CD8-positive, alpha-beta T cell (primary cell): ENCODE measurements at regions of chr11 and their contacts with region 1.

Region 1: DNA sequence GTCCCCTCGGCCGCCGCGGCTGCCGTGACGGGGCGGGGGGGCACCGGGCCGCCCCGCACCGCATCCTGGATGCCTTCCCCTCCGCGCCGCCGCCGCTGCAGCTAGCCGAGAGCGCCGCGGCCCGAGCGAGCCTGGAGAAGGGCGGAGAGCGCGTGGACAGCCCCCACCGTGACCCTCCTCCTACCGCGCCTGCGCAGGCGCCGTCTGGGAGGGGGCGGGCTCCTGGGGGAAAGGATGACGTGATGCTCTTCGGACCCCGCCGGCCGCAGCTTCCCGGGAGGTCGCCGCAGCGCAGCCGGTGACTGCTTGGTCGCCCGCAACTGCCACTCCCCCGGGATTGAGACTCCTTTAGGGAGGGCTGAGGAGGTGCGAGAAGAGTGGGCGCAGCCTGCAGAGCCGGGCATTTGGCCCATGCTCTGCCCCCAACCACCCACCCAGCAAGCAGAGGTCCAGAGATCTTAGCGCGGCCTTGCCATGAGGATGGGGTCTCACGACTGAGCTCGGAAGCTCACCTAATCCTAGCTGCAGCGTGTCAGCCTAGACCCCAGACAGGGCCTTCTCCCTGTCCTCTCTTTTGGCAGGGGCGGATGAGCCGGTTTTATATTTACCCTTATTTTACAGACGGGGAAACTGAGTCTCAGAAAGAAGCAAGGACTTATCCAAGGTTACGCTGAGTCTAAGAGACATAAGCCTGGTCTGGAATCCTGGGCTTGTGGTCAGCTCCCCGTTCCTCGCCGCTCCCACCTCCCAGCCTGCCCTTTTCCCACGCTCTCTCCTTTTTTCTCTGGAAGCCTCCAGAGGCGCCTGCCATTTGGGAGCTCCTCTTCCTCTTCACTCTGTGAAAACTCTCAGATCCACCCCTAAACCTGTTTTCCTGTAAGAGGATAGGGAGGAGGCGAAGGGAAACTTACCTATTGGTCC is at the start of gene DENND5A:
- DNase-seq: peak; percentile 12 to 74 (median 52)
- ATAC-seq: peak; percentile 44
- H3K4me3 ChIP-seq: peak within 1 kb of the TSS; percentile 71 to 79
- H3K4me3 Mint-ChIP-seq: peak within 1 kb of the TSS; percentile 98
- H3K27ac ChIP-seq: peak within 1 kb of the TSS; percentile 45 to 71
- H3K27ac Mint-ChIP-seq: peak within 1 kb of the TSS; percentile 97
- H3K4me1 ChIP-seq: peaks cover 23% of the 10 kb centered on the region
- H3K4me1 Mint-ChIP-seq: peaks cover 35% of the 10 kb centered on the region
- H3K27me3 ChIP-seq: no peaks in the 10 kb centered on the region
- H3K27me3 Mint-ChIP-seq: no peaks in the 10 kb centered on the region
- CTCF ChIP-seq: no peak
- total RNA-seq, gene DENND5A: 78.8 to 81.7 TPM

Region 2: DNA sequence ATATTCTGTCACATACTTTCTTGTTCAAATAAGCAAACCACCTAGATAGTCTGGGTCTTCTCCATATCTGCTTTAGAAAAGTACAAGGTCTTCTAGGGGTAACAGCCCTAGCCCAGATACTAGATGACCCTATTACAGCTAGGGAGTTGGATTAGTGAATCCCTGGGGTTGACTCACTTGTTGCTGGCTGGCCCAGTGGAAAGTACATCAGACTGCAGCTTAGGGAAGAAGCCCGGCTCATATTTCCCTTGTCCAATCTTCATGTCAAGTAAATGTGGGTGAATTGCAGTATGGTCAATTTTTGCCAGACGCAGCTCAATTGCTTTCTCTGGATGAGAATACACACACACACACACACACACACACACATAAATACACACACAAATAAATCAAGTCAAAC is 95.0 kb before region 1 on chr11:
- CTCF ChIA-PET with region 1: no interaction called
- POLR2A ChIA-PET with region 1: interaction called, 4 read pairs
- intact Hi-C with region 1: loop called in 1 of 2 experiments (anchors 5 kb)
- DNase-seq: no peak
- ATAC-seq: no peak
- H3K4me3 ChIP-seq: no peak overlapping the region
- H3K4me3 Mint-ChIP-seq: no peak overlapping the region
- H3K27ac ChIP-seq: no peak overlapping the region
- H3K27ac Mint-ChIP-seq: no peak overlapping the region
- H3K4me1 ChIP-seq: no peaks in the 10 kb centered on the region
- H3K4me1 Mint-ChIP-seq: peaks cover 5% of the 10 kb centered on the region
- H3K27me3 ChIP-seq: no peaks in the 10 kb centered on the region
- H3K27me3 Mint-ChIP-seq: no peaks in the 10 kb centered on the region
- CTCF ChIP-seq: no peak

Region 3: GRCh38 chr11:9203691-9204311 is 61.7 kb before region 1 on chr11:
- CTCF ChIA-PET with region 1: interaction called, 13 read pairs
- POLR2A ChIA-PET with region 1: no interaction called
- intact Hi-C with region 1: loop called in 1 of 2 experiments (anchors 5 kb)
- DNase-seq: peak in 6 of 9 experiments; percentile 3 to 62 (median 34)
- ATAC-seq: peak; percentile 70
- H3K4me3 ChIP-seq: no peak overlapping the region
- H3K4me3 Mint-ChIP-seq: no peak overlapping the region
- H3K27ac ChIP-seq: no peak overlapping the region
- H3K27ac Mint-ChIP-seq: no peak overlapping the region
- H3K4me1 ChIP-seq: peaks cover 3% of the 10 kb centered on the region
- H3K4me1 Mint-ChIP-seq: peaks cover 28% of the 10 kb centered on the region
- H3K27me3 ChIP-seq: no peaks in the 10 kb centered on the region
- H3K27me3 Mint-ChIP-seq: no peaks in the 10 kb centered on the region
- CTCF ChIP-seq: no peak

Region 4: GRCh38 chr11:9250139-9250582 is 15.3 kb before region 1 on chr11:
- CTCF ChIA-PET with region 1: interaction called, 4 read pairs
- POLR2A ChIA-PET with region 1: interaction called, 6 read pairs
- intact Hi-C with region 1: loop called in 1 of 2 experiments (anchors 2 kb)
- DNase-seq: peak in 5 of 9 experiments; percentile 46 to 85 (median 55)
- ATAC-seq: peak; percentile 87
- H3K4me3 ChIP-seq: peak overlapping the region in 1 of 2 experiments; percentile 26
- H3K4me3 Mint-ChIP-seq: peak overlapping the region; percentile 66
- H3K27ac ChIP-seq: peak overlapping the region in 1 of 2 experiments; percentile 7
- H3K27ac Mint-ChIP-seq: peak overlapping the region; percentile 81
- H3K4me1 ChIP-seq: peaks cover 71% of the 10 kb centered on the region
- H3K4me1 Mint-ChIP-seq: peaks cover 64% of the 10 kb centered on the region
- H3K27me3 ChIP-seq: no peaks in the 10 kb centered on the region
- H3K27me3 Mint-ChIP-seq: no peaks in the 10 kb centered on the region
- CTCF ChIP-seq: no peak

Region 5: DNA sequence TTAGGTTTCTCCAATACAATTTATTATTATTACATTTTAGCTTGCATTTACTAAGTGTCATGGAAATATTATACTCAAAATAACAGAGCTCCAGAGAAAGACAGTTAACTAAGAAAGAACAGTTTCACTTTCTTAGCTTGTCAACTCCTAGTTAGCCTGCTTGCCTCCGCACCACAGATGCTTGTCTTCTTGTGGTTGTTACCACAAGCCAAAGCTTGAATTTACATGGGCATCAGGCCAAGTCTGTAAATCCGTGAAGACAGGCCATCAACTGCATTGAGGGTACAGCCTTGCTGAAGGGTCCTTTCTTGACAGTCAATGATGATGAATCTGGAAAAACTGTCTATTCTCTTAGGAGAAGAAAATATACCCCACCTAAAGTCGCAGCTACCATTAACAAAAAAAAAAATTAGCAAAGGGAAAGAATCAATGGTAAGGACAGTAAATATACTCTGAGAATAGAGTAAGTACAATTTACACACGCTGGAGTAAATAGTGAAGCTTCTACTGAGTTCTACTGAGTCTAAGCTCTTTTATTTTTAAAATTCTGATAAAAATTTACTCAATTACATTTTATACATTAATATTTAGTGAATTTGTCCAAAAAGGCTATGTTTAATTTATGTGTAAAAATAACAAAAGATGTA is 15.3 kb after region 1 on chr11:
- CTCF ChIA-PET with region 1: no interaction called
- POLR2A ChIA-PET with region 1: interaction called, 10 read pairs
- intact Hi-C with region 1: loop called in 1 of 2 experiments (anchors 1 kb)
- DNase-seq: peak in 8 of 9 experiments; percentile 29 to 85 (median 60)
- ATAC-seq: peak; percentile 87
- H3K4me3 ChIP-seq: peak overlapping the region in 1 of 2 experiments; percentile 17
- H3K4me3 Mint-ChIP-seq: peak overlapping the region; percentile 54
- H3K27ac ChIP-seq: no peak overlapping the region
- H3K27ac Mint-ChIP-seq: peak overlapping the region; percentile 66
- H3K4me1 ChIP-seq: peaks cover 18% of the 10 kb centered on the region
- H3K4me1 Mint-ChIP-seq: peaks cover 24% of the 10 kb centered on the region
- H3K27me3 ChIP-seq: no peaks in the 10 kb centered on the region
- H3K27me3 Mint-ChIP-seq: no peaks in the 10 kb centered on the region
- CTCF ChIP-seq: no peak

Region 6: GRCh38 chr11:9363954-9364912 is 98.8 kb after region 1 on chr11:
- CTCF ChIA-PET with region 1: no interaction called
- POLR2A ChIA-PET with region 1: no interaction called
- intact Hi-C with region 1: loop called in 1 of 2 experiments (anchors 5 kb)
- DNase-seq: peak; percentile 43 to 91 (median 76)
- ATAC-seq: peak; percentile 88
- H3K4me3 ChIP-seq: peak overlapping the region; percentile 60 to 66
- H3K4me3 Mint-ChIP-seq: peak overlapping the region; percentile 87
- H3K27ac ChIP-seq: peak overlapping the region; percentile 61 to 93
- H3K27ac Mint-ChIP-seq: peak overlapping the region; percentile 85
- H3K4me1 ChIP-seq: peaks cover 10% of the 10 kb centered on the region
- H3K4me1 Mint-ChIP-seq: peaks cover 14% of the 10 kb centered on the region
- H3K27me3 ChIP-seq: no peaks in the 10 kb centered on the region
- H3K27me3 Mint-ChIP-seq: no peaks in the 10 kb centered on the region
- CTCF ChIP-seq: no peak